Activated T-helper 1 cell treated with anti-CD3 and anti-CD28 coated beads, Interleukin-12 subunit alpha, Interleukin-12 subunit beta, Interleukin-2, Interleukin-4 antibody, amounts not matched to agents 30 ng/mL and 10 ng/mL and 1 ng/mL, durations not matched to agents 14 hours and 24 hours and 36 hours (primary cell): ENCODE measurements at regions of chr12 and their contacts with region 1.

Region 1: DNA sequence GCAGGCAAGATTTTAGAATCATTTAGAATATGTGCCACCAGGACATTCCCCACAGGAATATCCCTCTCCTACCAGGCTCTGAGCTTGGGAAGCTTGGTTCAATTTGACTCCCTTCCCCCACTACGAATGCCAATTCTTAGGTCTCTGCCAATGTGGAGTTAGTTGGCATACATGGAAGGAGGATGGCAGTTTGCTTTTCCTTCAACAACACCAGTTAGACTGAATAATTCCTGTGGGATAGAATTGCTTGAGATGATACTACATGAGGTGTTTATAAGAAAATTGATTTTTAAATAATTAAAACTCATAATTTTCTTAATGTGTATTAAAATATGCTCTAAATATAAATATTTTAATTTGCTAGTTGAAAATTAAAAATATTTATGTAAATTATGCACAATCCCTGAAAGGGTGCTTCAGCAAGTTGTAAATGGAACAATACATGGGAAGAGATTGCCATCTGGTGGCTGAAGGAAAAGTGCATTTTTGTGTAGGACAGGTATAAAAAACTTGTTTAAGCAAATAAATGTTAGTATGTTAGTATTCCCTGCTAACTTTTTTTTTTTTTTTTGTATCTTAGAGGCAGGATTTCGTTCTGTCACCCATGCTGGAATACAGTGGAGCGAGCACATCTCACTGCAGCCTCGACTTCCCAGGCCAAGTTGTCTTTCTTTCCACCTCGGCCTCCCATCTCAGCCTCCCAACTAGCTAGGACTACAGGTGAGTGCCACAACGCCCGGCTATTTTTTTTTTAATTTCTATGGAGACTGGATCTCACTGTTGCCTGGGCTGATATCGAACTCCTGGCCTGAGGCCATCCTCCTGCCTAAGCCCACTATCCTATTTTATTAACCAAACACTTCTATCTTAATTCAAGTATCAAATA is 25.8 kb upstream of the STRAP start:
- DNase-seq: peak; percentile 17
- H3K4me3 Mint-ChIP-seq: no peak overlapping the region
- H3K27ac Mint-ChIP-seq: no peak overlapping the region
- H3K4me1 Mint-ChIP-seq: no peaks in the 10 kb centered on the region
- H3K27me3 Mint-ChIP-seq: peaks cover 16% of the 10 kb centered on the region

Region 2: GRCh38 chr12:15276088-15276698 is 580.1 kb before region 1 on chr12:
- intact Hi-C with region 1: loop called (anchors 2 kb)
- DNase-seq: no peak
- H3K4me3 Mint-ChIP-seq: no peak overlapping the region
- H3K27ac Mint-ChIP-seq: no peak overlapping the region
- H3K4me1 Mint-ChIP-seq: no peaks in the 10 kb centered on the region
- H3K27me3 Mint-ChIP-seq: peaks cover 2% of the 10 kb centered on the region

Region 3: GRCh38 chr12:15590180-15590826 is 266.0 kb before region 1 on chr12:
- intact Hi-C with region 1: loop called (anchors 1 kb)
- DNase-seq: peak; percentile 42
- H3K4me3 Mint-ChIP-seq: peak overlapping the region; percentile 72
- H3K27ac Mint-ChIP-seq: no peak overlapping the region
- H3K4me1 Mint-ChIP-seq: peaks cover 9% of the 10 kb centered on the region
- H3K27me3 Mint-ChIP-seq: no peaks in the 10 kb centered on the region

Region 4: DNA sequence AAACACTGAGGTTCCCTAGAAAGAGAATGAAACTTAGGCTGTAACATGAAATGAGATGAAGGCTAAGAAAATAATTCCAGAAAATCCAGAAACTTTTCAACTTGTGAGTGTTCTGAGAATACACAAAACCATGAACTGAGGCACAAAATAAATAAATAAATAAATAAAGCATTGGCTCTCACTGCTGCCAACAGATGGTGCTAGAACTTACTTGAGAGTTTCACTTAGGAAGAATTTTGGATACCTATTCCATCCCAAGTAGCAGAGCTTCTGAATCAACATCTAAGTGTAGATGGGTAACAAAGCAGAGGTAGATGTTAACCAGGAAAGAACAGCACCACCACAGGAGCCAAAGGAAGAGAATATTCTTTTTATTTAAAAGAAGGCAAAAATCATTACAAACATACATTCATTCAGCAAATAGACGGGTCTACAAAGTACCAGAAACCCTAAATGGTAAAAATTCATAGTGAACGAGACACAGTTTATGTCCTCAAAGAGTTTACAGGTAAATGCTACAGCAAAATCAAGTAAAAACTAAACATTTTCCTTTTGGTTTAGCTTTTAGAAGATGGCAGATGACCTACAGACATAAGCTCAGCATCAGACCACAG is 83.8 kb before region 1 on chr12:
- intact Hi-C with region 1: loop called (anchors 1 kb)
- DNase-seq: no peak
- H3K4me3 Mint-ChIP-seq: no peak overlapping the region
- H3K27ac Mint-ChIP-seq: no peak overlapping the region
- H3K4me1 Mint-ChIP-seq: no peaks in the 10 kb centered on the region
- H3K27me3 Mint-ChIP-seq: peaks cover 9% of the 10 kb centered on the region

Region 5: DNA sequence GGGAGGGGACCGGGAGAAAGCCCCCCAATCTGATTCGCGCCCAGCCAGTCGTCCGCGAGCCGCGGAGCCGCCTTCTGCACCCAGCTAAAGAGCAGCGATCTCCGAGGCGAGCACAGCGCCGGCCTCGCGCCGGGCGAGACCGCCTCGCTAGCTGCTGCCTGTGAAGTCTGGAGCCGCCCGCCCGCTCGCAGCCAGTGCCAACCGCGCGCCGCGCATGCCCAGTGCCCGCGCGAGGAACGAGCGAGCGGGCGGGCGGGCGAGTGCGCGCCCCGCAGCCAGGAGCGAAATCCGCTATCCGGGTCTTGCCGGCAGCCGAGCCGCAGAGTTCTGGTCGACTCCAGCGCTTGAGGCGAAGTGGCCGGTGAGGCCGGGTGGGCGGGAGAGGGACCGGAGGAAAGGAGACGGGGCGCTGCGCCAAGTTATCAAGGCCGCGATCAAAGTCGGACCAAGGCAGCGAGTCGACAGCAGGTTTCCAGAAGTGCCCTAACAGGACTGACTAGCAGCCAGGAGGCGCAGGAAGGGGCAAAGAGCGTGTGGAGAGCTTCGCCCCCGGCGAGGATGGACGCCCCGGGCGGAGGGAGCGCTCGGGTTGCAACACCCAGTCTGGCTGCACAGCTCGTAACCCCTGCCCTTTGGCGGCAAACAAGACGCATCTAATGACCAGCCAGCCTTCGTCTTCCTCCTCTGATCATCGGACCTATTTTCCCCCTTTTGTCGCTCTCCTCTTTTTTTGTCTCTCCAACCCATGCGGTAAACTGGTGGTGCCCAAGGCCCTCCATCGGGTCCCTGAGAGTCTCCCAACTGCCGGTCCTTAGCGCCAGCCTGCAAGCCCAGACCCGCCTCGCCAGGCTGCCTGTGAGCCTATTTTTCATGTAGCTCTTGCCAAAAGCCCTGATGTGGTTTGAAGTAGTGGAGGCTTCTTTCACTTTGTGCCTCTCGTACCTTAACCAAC is 66.8 kb before region 1 on chr12 and contains the start of gene EPS8:
- intact Hi-C with region 1: loop called (anchors 5 kb)
- DNase-seq: peak; percentile 83
- H3K4me3 Mint-ChIP-seq: peak within 1 kb of the TSS; percentile 91
- H3K27ac Mint-ChIP-seq: peak within 1 kb of the TSS; percentile 81
- H3K4me1 Mint-ChIP-seq: peaks cover 19% of the 10 kb centered on the region
- H3K27me3 Mint-ChIP-seq: peaks cover 73% of the 10 kb centered on the region
- total RNA-seq, gene EPS8: 1.9 and 3.1 TPM in 2 replicates